Activated CD4-positive, alpha-beta T cell treated with anti-CD3 and anti-CD28 coated beads, Interleukin-2, amount 10 ng/mL, durations not matched to agents 24 days and 14 days (primary cell): ENCODE measurements at regions of chr15 and their contacts with region 1.

Region 1: DNA sequence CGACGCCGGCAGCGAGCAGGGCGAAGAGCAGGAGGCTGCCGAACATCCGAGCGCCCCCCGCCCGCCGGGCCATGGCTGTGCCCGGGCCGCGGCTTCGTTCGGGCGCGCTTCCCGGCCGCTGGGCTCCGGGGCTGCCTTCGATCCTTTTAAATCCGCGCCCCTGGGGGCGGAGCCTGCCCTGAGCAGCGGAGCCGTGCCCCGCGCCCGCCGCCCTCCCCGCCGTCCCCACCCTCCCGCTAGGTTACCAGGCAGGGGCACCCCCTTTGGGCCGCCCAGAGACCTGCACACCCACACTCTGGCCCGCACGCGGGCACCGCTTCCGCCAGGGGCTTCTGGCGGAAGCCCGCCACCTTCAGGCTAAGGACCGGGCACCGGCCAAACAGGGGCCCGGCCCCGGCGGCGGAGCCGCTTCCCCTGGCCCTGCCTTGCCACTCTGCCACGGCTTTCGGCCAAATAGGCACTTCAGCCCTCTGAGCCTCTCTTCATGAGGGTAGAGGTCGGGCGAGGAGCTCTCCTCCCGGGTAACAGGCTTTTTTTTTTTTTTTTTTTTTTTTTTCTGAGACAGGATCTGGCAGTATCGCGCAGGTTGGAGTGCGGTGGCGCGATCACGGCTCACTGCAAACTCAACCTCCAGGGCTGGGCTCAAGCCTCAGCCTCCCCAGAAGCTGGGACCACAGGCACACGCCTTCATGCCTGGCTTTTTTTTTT is at the start of gene NMB:
- DNase-seq: peak; percentile 93
- H3K4me3 Mint-ChIP-seq: peak within 1 kb of the TSS; percentile 81
- H3K27ac Mint-ChIP-seq: peak within 1 kb of the TSS; percentile 87
- H3K4me1 Mint-ChIP-seq: peaks cover 21% of the 10 kb centered on the region
- H3K27me3 Mint-ChIP-seq: no peaks in the 10 kb centered on the region
- total RNA-seq, gene NMB: 2.8 and 3.7 TPM in 2 replicates

Region 2: GRCh38 chr15:84600851-84601838 is 57.1 kb before region 1 on chr15 and contains the start of gene ZSCAN2:
- intact Hi-C with region 1: loop called (anchors 1 kb)
- DNase-seq: peak; percentile 98
- H3K4me3 Mint-ChIP-seq: peak within 1 kb of the TSS; percentile 96
- H3K27ac Mint-ChIP-seq: peak within 1 kb of the TSS; percentile 83
- H3K4me1 Mint-ChIP-seq: peaks cover 50% of the 10 kb centered on the region
- H3K27me3 Mint-ChIP-seq: no peaks in the 10 kb centered on the region
- total RNA-seq, gene ZSCAN2: 6.8 TPM in 2 replicates

Region 3: DNA sequence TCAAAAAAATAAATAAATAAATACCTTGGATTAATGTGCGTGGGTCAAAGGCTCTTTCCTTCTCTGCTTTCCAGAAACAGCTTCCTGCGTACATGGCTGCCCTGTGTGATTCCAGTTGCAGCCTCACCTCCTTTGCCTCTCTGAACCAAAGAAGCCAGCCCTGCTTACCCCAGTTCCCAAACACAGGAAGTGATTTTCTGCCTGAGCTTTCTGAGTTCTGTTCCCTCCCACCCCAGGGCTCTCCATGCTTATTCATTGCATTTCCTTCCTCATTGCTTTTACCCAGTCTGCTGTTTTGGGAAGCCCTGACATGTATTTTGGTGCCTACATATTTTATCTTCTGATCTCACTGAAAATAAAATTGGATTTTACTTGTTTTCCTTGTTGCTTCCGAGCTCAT is 42.0 kb before region 1 on chr15:
- intact Hi-C with region 1: no loop called
- DNase-seq: no peak
- H3K4me3 Mint-ChIP-seq: no peak overlapping the region
- H3K27ac Mint-ChIP-seq: no peak overlapping the region
- H3K4me1 Mint-ChIP-seq: peaks cover 2% of the 10 kb centered on the region
- H3K27me3 Mint-ChIP-seq: no peaks in the 10 kb centered on the region

Region 4: DNA sequence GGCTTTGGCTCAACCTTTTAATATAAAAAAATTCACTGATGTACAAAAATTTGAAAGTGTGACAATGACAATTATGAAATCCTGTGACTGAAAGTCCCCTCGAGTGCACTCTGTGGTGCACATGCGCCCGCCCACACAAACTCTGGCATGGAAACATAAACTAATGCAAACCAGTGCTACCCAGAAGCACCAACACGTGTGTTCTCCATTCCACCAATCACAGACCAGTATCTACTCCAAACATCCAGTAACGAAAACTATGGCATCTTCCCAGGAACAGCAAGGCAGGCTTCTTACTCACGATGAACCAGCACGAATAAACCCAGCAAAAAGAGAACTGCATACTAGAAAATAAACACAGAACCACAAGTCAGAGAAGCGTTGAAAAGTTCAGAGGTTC is 11.5 kb after region 1 on chr15:
- intact Hi-C with region 1: loop called (anchors 1 kb)
- DNase-seq: no peak
- H3K4me3 Mint-ChIP-seq: no peak overlapping the region
- H3K27ac Mint-ChIP-seq: peak overlapping the region; percentile 90
- H3K4me1 Mint-ChIP-seq: peaks cover 32% of the 10 kb centered on the region
- H3K27me3 Mint-ChIP-seq: no peaks in the 10 kb centered on the region

Region 5: DNA sequence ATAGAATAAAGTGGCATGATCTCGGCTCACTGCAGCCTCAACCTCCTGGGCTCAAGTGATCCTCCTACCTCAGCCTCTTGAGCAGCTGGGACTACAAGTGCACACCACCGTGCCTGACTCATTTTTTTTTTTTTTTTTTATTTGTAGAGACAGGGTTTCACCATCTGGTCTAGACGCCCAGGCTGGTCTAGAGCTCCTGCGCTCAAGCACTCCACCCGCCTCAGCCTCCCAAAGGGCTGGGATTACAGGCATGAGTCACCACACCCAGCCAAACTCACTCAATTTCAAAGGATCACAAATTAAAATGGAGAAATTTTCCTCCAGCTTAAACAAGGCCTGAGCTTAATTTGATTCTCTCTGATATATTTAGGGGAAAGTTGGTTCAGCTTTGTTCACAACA is 27.1 kb after region 1 on chr15:
- intact Hi-C with region 1: no loop called
- DNase-seq: no peak
- H3K4me3 Mint-ChIP-seq: no peak overlapping the region
- H3K27ac Mint-ChIP-seq: no peak overlapping the region
- H3K4me1 Mint-ChIP-seq: peaks cover 19% of the 10 kb centered on the region
- H3K27me3 Mint-ChIP-seq: no peaks in the 10 kb centered on the region

Region 6: DNA sequence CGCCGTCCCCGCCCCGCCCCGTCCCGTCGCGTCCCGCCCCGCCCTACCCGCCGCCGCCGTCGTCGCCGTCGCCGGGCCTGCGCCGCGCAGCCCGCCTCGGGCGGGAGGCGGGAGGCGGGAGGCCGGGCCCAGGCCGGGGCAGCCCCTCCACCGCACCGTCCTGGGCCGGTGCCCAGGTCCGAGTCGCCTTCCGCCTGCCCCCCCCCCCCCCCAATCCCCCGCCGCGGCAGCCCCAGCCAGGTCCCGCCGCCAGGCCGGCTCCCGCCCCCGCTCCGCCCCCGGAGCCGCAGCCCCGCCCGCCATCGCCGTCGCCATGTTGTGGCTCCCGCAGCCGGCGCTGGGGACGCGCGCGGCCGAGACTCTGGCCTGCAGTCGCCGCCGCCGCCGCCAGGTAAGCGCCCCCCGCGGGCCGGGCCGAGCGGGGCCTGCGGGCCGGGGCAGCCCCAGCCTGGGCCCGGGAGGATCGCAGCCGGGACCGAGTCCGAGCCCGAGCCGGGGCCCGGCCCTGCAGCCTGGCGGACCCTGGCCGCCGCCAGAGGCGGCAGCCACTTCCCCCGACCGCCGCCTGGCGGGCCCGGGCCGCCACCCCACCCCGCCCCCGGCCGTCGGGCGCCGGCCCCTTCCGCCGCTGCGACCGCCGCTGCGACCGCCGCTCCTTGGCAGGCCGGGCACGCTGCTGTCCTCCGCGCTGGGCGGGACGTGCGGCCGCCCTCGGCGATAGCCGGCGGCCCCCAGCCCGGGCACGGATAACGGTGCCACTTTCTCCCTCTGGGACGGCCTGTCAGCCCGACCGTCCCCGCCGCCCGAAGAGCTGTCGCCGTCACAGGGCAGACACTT is 90.3 kb after region 1 on chr15 and contains the start of gene ZNF592:
- intact Hi-C with region 1: loop called (anchors 1 kb)
- DNase-seq: peak; percentile 94
- H3K4me3 Mint-ChIP-seq: peak within 1 kb of the TSS; percentile 97
- H3K27ac Mint-ChIP-seq: peak within 1 kb of the TSS; percentile 94
- H3K4me1 Mint-ChIP-seq: peaks cover 50% of the 10 kb centered on the region
- H3K27me3 Mint-ChIP-seq: no peaks in the 10 kb centered on the region
- total RNA-seq, gene ZNF592: 30.0 and 30.6 TPM in 2 replicates

Region 7: DNA sequence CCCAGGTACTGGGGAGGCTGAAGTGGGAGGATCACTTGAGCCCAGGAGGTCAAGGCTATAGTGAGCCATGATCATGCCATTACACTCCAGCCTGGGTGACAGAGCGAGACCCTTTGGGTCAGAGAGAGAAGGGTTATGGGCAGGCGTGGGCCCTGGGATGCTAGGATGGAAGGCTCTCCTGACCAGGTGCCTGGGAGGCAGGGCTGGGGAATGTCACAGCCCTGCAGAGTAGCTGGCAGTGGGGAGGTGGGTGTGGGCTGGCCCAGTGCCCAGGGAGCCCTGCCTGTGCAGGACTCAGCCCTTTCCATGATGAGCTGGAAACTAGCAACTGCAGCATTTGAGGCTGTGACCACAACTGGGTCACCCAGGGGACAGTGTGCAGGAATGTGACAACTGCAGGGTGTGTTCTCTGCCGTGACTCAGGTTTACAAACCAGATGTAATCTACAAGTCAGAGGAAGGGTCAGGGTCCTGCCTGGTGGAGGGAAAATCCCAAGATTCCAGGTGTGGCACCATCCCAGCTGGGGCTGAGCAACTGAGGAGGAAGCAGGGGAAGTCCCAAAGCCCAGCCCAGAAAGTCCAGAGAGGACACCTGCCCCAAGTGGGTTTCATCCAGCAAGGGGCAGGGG is 271.6 kb after region 1 on chr15:
- intact Hi-C with region 1: loop called (anchors 2 kb)
- DNase-seq: no peak
- H3K4me3 Mint-ChIP-seq: no peak overlapping the region
- H3K27ac Mint-ChIP-seq: no peak overlapping the region
- H3K4me1 Mint-ChIP-seq: peaks cover 5% of the 10 kb centered on the region
- H3K27me3 Mint-ChIP-seq: peaks cover 3% of the 10 kb centered on the region

Region 8: GRCh38 chr15:86135041-86135440 is 1476.8 kb after region 1 on chr15:
- intact Hi-C with region 1: no loop called
- DNase-seq: no peak
- H3K4me3 Mint-ChIP-seq: no peak overlapping the region
- H3K27ac Mint-ChIP-seq: no peak overlapping the region
- H3K4me1 Mint-ChIP-seq: no peaks in the 10 kb centered on the region
- H3K27me3 Mint-ChIP-seq: no peaks in the 10 kb centered on the region